Endothelial cell of umbilical vein (primary cell): ENCODE measurements at regions of chrX and their contacts with region 1.

Region 1: DNA sequence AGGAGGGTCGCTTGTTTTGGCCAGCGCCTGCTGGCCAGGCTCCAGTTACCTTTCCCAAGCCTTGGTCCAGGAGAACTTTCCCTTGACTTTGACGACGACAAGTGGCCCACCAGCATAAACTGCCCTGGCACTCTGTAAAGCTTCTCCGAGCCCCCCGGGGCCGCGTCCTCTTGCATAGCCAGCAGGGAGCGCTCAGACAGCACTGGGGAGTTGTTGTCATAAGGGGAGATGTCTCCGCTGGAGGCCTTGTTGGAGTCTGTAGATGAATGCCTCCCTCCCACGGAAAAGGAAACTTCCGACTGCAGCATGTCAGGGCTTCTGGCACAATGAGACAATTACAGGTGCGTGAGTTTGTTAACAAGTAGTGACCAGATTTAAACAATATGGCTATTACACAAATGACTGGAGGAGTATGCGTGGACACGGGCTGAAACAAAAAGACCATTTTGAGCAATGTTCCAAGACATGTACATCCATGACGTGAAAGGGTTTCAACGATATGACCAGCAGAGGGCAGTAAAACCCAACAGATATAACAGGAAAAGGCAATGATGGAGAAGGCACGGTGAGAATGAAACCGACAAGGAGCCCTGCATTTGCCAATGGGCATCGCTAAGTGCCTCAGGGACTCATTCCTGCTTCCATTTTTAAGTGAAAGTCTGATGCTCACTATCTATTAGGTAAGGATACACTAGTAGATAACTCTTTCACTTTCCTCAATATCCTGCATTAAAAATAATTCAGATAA is 33.0 kb downstream of the HCCS start:
- DNase-seq: peak; percentile 75
- H3K4me3 ChIP-seq: no peak overlapping the region
- H3K27ac ChIP-seq: no peak overlapping the region
- H3K4me1 ChIP-seq: no peaks in the 10 kb centered on the region
- H3K27me3 ChIP-seq: no peaks in the 10 kb centered on the region
- CTCF ChIP-seq: peak; percentile 31 to 32
- POLR2A ChIP-seq: no peak

Region 2: GRCh38 chrX:11164433-11164832 is 20.3 kb after region 1 on chrX:
- CTCF ChIA-PET with region 1: no interaction called
- POLR2A ChIA-PET with region 1: no interaction called
- dilution Hi-C with region 1: no loop called
- intact Hi-C with region 1: no loop called
- DNase-seq: no peak
- H3K4me3 ChIP-seq: no peak overlapping the region
- H3K27ac ChIP-seq: no peak overlapping the region
- H3K4me1 ChIP-seq: no peaks in the 10 kb centered on the region
- H3K27me3 ChIP-seq: no peaks in the 10 kb centered on the region
- CTCF ChIP-seq: no peak
- POLR2A ChIP-seq: no peak

Region 3: GRCh38 chrX:11341274-11342201 is 197.4 kb after region 1 on chrX:
- CTCF ChIA-PET with region 1: no interaction called
- POLR2A ChIA-PET with region 1: no interaction called
- dilution Hi-C with region 1: no loop called
- intact Hi-C with region 1: loop called (anchors 1 kb)
- DNase-seq: peak; percentile 89
- H3K4me3 ChIP-seq: peak overlapping the region in 1 of 3 experiments; percentile 18
- H3K27ac ChIP-seq: peak overlapping the region; percentile 96
- H3K4me1 ChIP-seq: peaks cover 14% of the 10 kb centered on the region
- H3K27me3 ChIP-seq: no peaks in the 10 kb centered on the region
- CTCF ChIP-seq: no peak
- POLR2A ChIP-seq: no peak

Region 4: DNA sequence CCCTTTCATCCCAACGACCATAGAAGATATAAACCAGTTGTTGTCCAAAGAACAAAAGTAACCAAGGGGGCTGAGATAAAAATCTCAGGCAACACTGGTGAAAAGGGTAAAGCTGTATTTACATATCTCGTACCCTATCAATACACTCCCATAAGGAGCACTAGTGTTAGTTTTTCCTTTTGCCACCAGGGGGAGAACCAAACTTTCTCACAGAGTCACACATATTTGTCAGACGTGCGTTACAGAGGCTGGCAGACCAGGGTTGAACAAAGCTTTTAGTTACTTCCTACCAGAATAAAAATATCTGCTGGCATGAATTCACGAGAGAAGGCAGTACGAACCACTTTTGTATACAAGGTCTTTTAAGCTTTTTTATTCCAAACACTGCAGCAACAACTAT is 237.4 kb after region 1 on chrX:
- CTCF ChIA-PET with region 1: interaction called, 5 read pairs
- POLR2A ChIA-PET with region 1: no interaction called
- dilution Hi-C with region 1: no loop called
- intact Hi-C with region 1: loop called (anchors 1 kb)
- DNase-seq: peak; percentile 74
- H3K4me3 ChIP-seq: no peak overlapping the region
- H3K27ac ChIP-seq: no peak overlapping the region
- H3K4me1 ChIP-seq: peaks cover 3% of the 10 kb centered on the region
- H3K27me3 ChIP-seq: no peaks in the 10 kb centered on the region
- CTCF ChIP-seq: peak; percentile 35 to 46
- POLR2A ChIP-seq: no peak

Region 5: GRCh38 chrX:11533211-11533651 is 389.1 kb after region 1 on chrX:
- CTCF ChIA-PET with region 1: interaction called, 4 read pairs
- POLR2A ChIA-PET with region 1: no interaction called
- dilution Hi-C with region 1: no loop called
- intact Hi-C with region 1: loop called (anchors 1 kb)
- DNase-seq: peak; percentile 67
- H3K4me3 ChIP-seq: no peak overlapping the region
- H3K27ac ChIP-seq: no peak overlapping the region
- H3K4me1 ChIP-seq: no peaks in the 10 kb centered on the region
- H3K27me3 ChIP-seq: peaks cover 0 to 3% of the 10 kb centered on the region in 2 experiments
- CTCF ChIP-seq: peak; percentile 30 to 43
- POLR2A ChIP-seq: no peak

Region 6: DNA sequence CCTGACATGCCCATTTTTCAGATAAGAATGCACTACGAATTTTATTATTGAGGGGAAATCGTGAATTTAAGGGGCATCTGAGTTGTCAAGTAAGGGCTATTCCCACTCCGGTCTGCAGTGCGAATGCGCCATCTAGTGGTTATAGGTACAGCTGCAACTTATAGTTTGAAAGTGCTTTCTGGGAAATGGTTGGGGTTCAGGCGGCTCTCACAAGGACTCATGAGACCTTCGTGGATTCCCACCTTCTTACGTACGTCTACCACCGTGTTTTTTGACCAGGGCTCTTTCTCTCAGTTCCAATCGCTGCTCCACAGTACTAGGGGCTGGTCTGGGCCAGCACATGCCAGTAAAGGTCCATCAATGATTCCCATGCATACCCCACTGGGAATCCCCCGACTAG is 626.2 kb after region 1 on chrX:
- CTCF ChIA-PET with region 1: no interaction called
- POLR2A ChIA-PET with region 1: no interaction called
- dilution Hi-C with region 1: no loop called
- intact Hi-C with region 1: loop called (anchors 1 kb)
- DNase-seq: peak; percentile 51
- H3K4me3 ChIP-seq: no peak overlapping the region
- H3K27ac ChIP-seq: no peak overlapping the region
- H3K4me1 ChIP-seq: no peaks in the 10 kb centered on the region
- H3K27me3 ChIP-seq: no peaks in the 10 kb centered on the region
- CTCF ChIP-seq: peak; percentile 70 to 72
- POLR2A ChIP-seq: no peak